ENCODE measurements at regions of chr19 and their contacts with region 1.

Region 1: GRCh38 chr19:43416951-43417623 is 2.4 kb downstream of the TEX101 start:
- DNase-seq: no peak
- ATAC-seq: no peak
- H3K4me3 Mint-ChIP-seq: no peak overlapping the region
- H3K27ac Mint-ChIP-seq: no peak overlapping the region
- H3K4me1 Mint-ChIP-seq: no peaks in the 10 kb centered on the region
- H3K27me3 Mint-ChIP-seq: no peaks in the 10 kb centered on the region
- CTCF ChIP-seq: no peak

Region 2: GRCh38 chr19:43433358-43433673 is 16.2 kb after region 1 on chr19:
- CTCF ChIA-PET with region 1: interaction called, 12 read pairs
- POLR2A ChIA-PET with region 1: interaction called, 3 read pairs
- intact Hi-C with region 1: no loop called
- DNase-seq: no peak
- ATAC-seq: peak; percentile 17
- H3K4me3 Mint-ChIP-seq: no peak overlapping the region
- H3K27ac Mint-ChIP-seq: no peak overlapping the region
- H3K4me1 Mint-ChIP-seq: peaks cover 30% of the 10 kb centered on the region
- H3K27me3 Mint-ChIP-seq: no peaks in the 10 kb centered on the region
- CTCF ChIP-seq: no peak

Region 3: DNA sequence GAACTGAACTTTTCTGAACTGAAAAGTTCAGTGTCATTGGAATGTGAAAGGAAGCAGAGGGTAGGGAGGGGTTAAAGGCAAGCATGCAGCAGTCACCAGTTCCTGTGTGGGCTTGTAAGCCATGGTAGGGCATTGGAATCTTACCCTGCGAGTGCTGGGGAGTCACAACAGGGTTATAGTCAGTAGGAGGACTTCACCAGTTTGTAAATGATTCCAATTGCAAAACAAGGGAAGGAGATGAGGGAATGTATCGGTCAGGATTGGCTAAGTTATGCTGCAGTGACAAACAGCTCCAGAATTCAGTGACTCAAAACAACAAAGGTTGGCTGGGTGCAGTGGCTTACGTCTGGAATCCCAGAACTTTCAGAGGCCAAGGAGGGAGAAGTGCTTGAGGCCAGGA is 35.5 kb after region 1 on chr19:
- CTCF ChIA-PET with region 1: no interaction called
- POLR2A ChIA-PET with region 1: no interaction called
- intact Hi-C with region 1: no loop called
- DNase-seq: no peak
- ATAC-seq: no peak
- H3K4me3 Mint-ChIP-seq: no peak overlapping the region
- H3K27ac Mint-ChIP-seq: no peak overlapping the region
- H3K4me1 Mint-ChIP-seq: peaks cover 12% of the 10 kb centered on the region
- H3K27me3 Mint-ChIP-seq: no peaks in the 10 kb centered on the region
- CTCF ChIP-seq: no peak